ENCODE measurements at regions of chr11 and their contacts with region 1.

Region 1: DNA sequence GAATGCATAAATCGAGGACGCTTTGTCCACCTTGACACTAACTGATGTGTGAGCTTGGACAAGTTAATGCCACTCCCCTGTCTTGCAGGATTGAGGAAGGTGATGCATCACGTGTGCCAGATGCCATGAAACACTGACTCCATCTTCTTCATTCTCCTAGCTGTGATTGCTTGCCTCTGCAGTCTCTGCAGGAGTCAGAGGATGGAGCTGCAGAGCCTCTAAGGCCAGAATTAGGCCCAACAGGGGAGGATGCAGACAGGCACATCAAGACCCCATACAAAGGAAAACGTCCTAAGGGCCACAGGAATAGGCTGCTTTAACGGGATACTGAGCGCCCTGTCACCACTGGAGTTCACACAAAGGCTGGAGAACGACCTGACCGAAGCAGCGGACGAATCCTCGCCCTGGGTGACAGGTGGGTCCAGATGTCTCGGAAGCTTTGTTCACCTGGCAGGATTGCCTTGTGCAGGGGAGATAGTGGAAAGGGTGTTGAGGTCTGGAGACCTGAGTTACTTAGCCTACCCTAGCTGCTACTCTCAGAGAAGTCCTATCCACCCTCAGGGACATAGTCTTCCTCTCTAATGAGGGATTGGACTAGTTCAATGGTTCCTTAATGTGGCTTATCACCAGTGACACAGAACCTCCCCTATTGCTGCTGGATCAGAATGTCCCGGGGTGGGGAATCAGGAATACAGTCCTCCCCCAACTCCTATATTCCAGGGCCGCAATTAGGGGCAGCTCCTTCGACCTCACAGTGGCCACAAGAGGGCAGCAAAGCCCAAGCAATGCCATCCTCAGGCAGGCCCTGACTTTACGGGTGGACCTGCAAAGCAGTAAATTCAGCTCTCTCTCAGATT is 32.4 kb downstream of the DBX1 start:
- DNase-seq: peak; percentile 87
- H3K4me3 Mint-ChIP-seq: no peak overlapping the region
- H3K27ac Mint-ChIP-seq: no peak overlapping the region
- H3K4me1 Mint-ChIP-seq: peaks cover 11% of the 10 kb centered on the region
- H3K27me3 Mint-ChIP-seq: peaks cover 13% of the 10 kb centered on the region

Region 2: DNA sequence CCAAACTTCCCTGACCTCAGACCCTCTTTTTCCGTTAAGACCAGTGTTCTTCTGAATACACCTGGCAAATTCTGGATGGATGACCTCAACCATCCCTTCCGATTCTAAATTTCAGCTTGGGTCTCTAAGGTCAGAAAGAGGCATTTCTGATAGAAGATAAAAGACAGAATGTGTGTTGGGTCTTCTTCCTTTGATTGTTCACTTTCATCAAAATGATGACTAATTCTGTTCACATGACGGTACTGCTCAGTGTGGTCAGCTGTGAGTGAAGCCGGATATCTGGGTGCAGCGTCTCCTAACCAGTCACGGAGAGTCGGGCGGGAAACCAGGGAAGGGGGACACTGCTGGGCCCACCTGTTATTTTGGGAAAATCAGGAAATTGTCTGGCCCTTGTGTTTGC is 566.9 kb before region 1 on chr11:
- CTCF ChIA-PET with region 1: no interaction called
- intact Hi-C with region 1: loop called (anchors 10 kb)
- DNase-seq: no peak
- H3K4me3 Mint-ChIP-seq: no peak overlapping the region
- H3K27ac Mint-ChIP-seq: no peak overlapping the region
- H3K4me1 Mint-ChIP-seq: no peaks in the 10 kb centered on the region
- H3K27me3 Mint-ChIP-seq: peaks cover 17% of the 10 kb centered on the region

Region 3: GRCh38 chr11:19832086-19832750 is 295.7 kb before region 1 on chr11:
- CTCF ChIA-PET with region 1: no interaction called
- intact Hi-C with region 1: no loop called
- DNase-seq: no peak
- H3K4me3 Mint-ChIP-seq: no peak overlapping the region
- H3K27ac Mint-ChIP-seq: no peak overlapping the region
- H3K4me1 Mint-ChIP-seq: no peaks in the 10 kb centered on the region
- H3K27me3 Mint-ChIP-seq: no peaks in the 10 kb centered on the region

Region 4: DNA sequence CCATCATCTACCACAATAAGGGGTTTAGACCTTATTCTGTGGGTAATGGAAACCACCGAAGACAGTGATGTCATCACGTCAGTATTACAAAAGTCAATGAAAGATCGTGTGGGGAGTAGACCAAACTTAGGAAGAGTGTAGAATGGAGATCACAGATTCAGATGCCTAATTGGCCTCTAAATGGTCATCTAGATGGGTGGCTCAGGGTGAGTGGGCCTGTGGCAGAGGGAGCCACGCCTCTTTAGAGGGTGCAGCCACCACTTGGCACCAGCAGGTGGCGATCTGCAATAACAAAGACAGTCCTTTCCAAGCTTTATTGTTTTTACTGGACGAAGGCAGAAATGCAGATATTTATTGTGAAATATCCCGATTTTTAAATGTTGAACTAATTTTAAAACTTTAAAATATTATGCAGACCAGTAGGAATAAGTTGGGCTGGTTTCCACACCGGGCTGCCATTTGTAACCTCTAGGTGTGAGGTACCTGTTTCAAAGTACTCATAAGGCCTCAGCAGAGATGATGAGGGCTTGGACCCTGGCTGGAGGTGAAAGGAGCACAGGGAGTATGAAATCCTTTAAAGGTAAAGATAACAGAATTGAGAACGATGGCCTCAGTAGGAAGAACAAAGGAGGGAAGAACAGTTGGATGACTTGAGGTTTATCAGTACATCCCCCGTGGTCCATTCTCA is 189.6 kb before region 1 on chr11:
- CTCF ChIA-PET with region 1: interaction called, 6 read pairs
- intact Hi-C with region 1: loop called (anchors 5 kb)
- DNase-seq: peak; percentile 52
- H3K4me3 Mint-ChIP-seq: no peak overlapping the region
- H3K27ac Mint-ChIP-seq: no peak overlapping the region
- H3K4me1 Mint-ChIP-seq: no peaks in the 10 kb centered on the region
- H3K27me3 Mint-ChIP-seq: peaks cover 4% of the 10 kb centered on the region

Region 5: GRCh38 chr11:20110908-20111669 is 16.8 kb before region 1 on chr11:
- CTCF ChIA-PET with region 1: interaction called, 46 read pairs
- intact Hi-C with region 1: no loop called
- DNase-seq: peak; percentile 68
- H3K4me3 Mint-ChIP-seq: no peak overlapping the region
- H3K27ac Mint-ChIP-seq: no peak overlapping the region
- H3K4me1 Mint-ChIP-seq: no peaks in the 10 kb centered on the region
- H3K27me3 Mint-ChIP-seq: peaks cover 2% of the 10 kb centered on the region

Region 6: DNA sequence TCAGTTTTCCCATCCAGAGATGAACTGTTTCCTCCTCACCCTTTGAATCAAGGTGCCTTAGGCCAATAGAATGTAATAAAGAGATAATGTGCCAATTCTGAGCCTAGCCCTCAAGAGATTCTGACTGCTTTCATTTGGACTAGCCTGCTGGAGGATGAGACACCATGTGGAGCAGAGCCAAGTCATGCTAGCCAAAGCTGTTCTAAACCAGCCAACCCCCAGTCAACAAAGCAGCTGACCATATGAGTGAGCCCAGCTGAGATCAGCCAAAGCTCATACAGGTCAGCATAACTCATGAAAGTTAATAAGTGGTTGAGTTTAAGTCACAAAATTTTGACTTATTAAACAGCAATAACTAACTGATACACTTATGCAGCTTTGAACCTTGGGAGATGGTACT is 99.0 kb after region 1 on chr11:
- CTCF ChIA-PET with region 1: no interaction called
- intact Hi-C with region 1: no loop called
- DNase-seq: no peak
- H3K4me3 Mint-ChIP-seq: no peak overlapping the region
- H3K27ac Mint-ChIP-seq: no peak overlapping the region
- H3K4me1 Mint-ChIP-seq: no peaks in the 10 kb centered on the region
- H3K27me3 Mint-ChIP-seq: peaks cover 18% of the 10 kb centered on the region

Region 7: DNA sequence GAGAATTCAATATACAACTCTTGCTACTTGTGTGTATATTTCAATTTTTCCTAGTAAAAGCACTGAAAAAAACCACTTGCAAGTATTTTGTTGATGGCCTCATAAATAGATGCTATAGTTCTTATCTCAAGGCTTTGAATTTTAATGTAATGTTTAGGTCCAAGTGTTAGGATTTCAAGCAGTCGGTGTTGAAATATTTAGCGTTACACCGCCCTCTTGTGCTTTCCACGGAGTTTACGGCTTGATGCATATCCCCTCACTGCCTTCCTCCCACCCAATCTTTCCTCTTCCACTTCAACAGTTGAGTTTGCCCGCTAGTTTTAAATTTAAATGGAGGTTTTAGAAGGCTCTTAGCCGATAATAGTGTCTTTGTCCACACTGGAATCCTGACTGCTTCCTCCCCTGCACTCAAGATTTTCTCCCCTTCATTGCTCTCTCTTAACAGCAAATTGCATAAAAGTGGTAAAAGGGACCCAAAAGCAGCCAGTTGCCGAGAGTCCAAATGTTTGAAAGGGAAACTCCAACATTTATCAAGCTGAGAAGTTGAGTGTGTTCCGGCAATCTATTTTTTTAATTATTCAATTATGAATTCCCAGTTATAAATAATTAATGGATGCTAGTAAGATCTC is 209.7 kb after region 1 on chr11:
- CTCF ChIA-PET with region 1: interaction called, 5 read pairs
- intact Hi-C with region 1: loop called (anchors 1 kb)
- DNase-seq: peak; percentile 35
- H3K4me3 Mint-ChIP-seq: no peak overlapping the region
- H3K27ac Mint-ChIP-seq: no peak overlapping the region
- H3K4me1 Mint-ChIP-seq: no peaks in the 10 kb centered on the region
- H3K27me3 Mint-ChIP-seq: peaks cover 48% of the 10 kb centered on the region

Region 8: DNA sequence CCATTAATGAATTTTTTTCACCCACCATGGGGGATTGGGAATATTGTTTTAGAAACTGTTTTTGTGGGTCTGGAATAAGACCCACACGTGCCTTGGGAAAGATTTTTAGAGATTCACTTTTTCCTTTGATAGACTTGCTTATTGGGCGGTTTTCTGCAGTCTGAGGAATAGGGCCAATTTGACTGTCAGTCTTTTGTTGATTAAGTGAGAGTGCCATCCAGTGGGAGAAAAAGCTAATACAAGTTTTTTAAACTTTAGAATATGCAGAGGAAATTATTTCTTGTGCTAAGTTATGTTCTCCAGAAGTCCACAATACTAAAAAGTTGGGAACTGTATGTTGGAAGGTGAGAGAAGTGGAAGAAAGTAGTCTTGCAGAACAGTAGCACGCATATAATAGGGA is 315.7 kb after region 1 on chr11:
- CTCF ChIA-PET with region 1: no interaction called
- intact Hi-C with region 1: loop called (anchors 2 kb)
- DNase-seq: no peak
- H3K4me3 Mint-ChIP-seq: no peak overlapping the region
- H3K27ac Mint-ChIP-seq: no peak overlapping the region
- H3K4me1 Mint-ChIP-seq: peaks cover 2% of the 10 kb centered on the region
- H3K27me3 Mint-ChIP-seq: no peaks in the 10 kb centered on the region

Region 9: GRCh38 chr11:20671856-20672546 is 544.1 kb after region 1 on chr11:
- CTCF ChIA-PET with region 1: interaction called, 3 read pairs
- intact Hi-C with region 1: loop called (anchors 2 kb)
- DNase-seq: no peak
- H3K4me3 Mint-ChIP-seq: no peak overlapping the region
- H3K27ac Mint-ChIP-seq: no peak overlapping the region
- H3K4me1 Mint-ChIP-seq: peaks cover 12% of the 10 kb centered on the region
- H3K27me3 Mint-ChIP-seq: peaks cover 66% of the 10 kb centered on the region